Sigmoid colon (tissue), 7 donors: ENCODE measurements at regions of chr12 and their contacts with region 1.

Region 1: DNA sequence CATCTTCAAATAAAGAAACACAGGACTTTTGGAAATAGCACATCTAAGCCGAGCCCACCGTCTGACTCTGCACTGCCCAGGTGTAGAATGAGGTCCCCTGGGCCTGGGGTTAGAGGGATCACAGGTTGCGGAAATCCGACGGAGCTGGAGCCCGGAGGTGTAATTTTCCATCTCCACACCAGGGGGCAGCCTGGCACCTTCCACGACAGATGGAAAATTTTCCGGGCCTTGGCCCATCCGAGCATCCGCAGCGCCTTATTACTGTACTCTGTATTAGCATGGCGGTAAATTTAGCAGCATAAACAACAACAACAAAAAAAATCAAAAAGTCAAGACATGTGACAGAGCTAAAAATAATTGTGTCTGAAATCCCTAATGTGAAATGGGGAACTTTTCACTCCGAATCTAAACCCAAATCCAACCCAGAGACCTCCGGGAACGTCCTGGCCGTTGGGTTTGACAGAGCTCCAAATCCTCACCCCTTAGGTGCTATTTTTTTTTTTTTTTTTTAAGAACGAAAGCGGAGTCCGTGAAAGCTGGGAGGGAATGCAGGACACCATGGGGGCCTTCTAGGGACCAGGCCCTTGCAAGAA is 93.9 kb downstream of the KSR2 start:
- DNase-seq: peak; percentile 76
- H3K4me3 ChIP-seq: no peak overlapping the region
- H3K27ac ChIP-seq: no peak overlapping the region
- H3K4me1 ChIP-seq: no peaks in the 10 kb centered on the region
- H3K27me3 ChIP-seq: peaks cover 0 to 32% (median 26%) of the 10 kb centered on the region in 3 donors
- CTCF ChIP-seq: peak; percentile 50 to 85 (median 81)
- EP300 ChIP-seq: no peak
- POLR2A ChIP-seq: no peak

Region 2: GRCh38 chr12:118035246-118036041 is 160.5 kb after region 1 on chr12:
- intact Hi-C with region 1: loop called (anchors 10 kb)
- DNase-seq: no peak
- H3K4me3 ChIP-seq: no peak overlapping the region
- H3K27ac ChIP-seq: no peak overlapping the region
- H3K4me1 ChIP-seq: no peaks in the 10 kb centered on the region
- H3K27me3 ChIP-seq: no peaks in the 10 kb centered on the region
- CTCF ChIP-seq: no peak
- EP300 ChIP-seq: no peak
- POLR2A ChIP-seq: no peak

Region 3: GRCh38 chr12:118082161-118082560 is 207.2 kb after region 1 on chr12:
- intact Hi-C with region 1: no loop called
- DNase-seq: no peak
- H3K4me3 ChIP-seq: no peak overlapping the region
- H3K27ac ChIP-seq: no peak overlapping the region
- H3K4me1 ChIP-seq: no peaks in the 10 kb centered on the region
- H3K27me3 ChIP-seq: no peaks in the 10 kb centered on the region
- CTCF ChIP-seq: no peak
- EP300 ChIP-seq: no peak
- POLR2A ChIP-seq: no peak